PC-3 (cell line): ENCODE measurements at regions of chr9 and their contacts with region 1.

Region 1: DNA sequence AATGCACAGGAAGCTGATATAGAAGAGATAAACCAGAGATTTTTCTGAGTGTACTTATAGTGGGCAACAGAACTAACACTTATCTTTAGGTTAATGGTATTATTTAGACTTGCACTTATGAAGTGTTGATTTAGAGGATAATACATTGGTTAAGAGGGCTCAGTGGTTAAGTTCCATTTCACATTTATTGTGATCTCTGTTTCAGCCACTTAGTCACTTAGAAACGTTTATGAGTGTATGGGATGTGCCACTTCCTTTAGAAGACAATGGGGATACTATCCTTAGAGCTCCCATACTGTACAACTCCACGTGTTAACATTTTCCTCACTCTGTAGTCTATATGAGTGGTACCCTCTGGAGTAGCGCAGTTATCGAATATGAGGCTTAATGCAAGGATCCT is 57.5 kb downstream of the PIP5K1B start:
- DNase-seq: no peak
- ATAC-seq: no peak
- H3K4me3 ChIP-seq: no peak overlapping the region
- H3K27ac ChIP-seq: no peak overlapping the region
- H3K4me1 ChIP-seq: no peaks in the 10 kb centered on the region
- H3K27me3 ChIP-seq: peaks cover 50% of the 10 kb centered on the region
- CTCF ChIP-seq: no peak

Region 2: GRCh38 chr9:68685770-68686169 is 76.8 kb before region 1 on chr9:
- CTCF ChIA-PET with region 1: no interaction called
- POLR2A ChIA-PET with region 1: no interaction called
- intact Hi-C with region 1: no loop called
- DNase-seq: peak; percentile 51
- ATAC-seq: peak; percentile 68
- H3K4me3 ChIP-seq: no peak overlapping the region
- H3K27ac ChIP-seq: no peak overlapping the region
- H3K4me1 ChIP-seq: no peaks in the 10 kb centered on the region
- H3K27me3 ChIP-seq: peaks cover 39% of the 10 kb centered on the region
- CTCF ChIP-seq: peak; percentile 61

Region 3: DNA sequence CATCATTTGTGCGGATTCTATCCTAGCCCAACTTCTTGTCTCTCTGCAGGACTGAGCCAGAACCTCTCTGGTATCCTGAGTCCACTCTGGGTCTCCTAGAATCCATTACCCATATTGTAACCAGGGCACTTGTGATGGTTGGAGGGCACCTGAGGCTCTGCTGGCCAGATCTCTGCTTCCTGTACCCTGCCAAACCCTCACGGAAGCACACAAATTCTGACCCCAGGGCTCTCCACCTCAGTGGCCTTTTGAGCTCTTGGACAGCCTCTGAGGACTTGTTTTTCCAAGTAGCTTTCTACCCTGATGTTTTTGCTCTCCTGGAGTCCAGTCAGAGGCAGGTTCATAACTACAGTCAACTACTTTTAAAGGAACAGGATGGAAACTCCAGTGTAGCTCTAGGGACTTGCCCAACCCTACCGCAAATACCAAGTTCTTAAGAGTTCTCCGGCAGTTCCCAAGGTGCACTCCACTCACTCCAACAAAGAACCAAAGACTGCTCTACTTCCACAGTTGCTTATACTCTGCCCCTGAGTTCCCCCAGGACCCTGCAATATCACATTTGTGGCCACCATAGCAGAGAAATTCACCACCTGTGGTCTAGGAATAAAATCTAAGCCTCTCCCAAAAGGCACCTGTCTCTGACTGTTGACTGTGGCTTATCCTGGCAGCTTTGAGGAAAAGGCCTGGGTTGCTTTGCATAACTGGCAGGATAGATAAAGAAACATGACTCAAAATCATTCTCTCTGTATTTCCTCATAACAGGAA is 48.0 kb before region 1 on chr9:
- CTCF ChIA-PET with region 1: no interaction called
- POLR2A ChIA-PET with region 1: no interaction called
- intact Hi-C with region 1: loop called (anchors 5 kb)
- DNase-seq: no peak
- ATAC-seq: no peak
- H3K4me3 ChIP-seq: no peak overlapping the region
- H3K27ac ChIP-seq: no peak overlapping the region
- H3K4me1 ChIP-seq: no peaks in the 10 kb centered on the region
- H3K27me3 ChIP-seq: peaks cover 58% of the 10 kb centered on the region
- CTCF ChIP-seq: no peak